K562 (cell line): ENCODE measurements at regions of chr15 and their contacts with region 1.

Region 1: DNA sequence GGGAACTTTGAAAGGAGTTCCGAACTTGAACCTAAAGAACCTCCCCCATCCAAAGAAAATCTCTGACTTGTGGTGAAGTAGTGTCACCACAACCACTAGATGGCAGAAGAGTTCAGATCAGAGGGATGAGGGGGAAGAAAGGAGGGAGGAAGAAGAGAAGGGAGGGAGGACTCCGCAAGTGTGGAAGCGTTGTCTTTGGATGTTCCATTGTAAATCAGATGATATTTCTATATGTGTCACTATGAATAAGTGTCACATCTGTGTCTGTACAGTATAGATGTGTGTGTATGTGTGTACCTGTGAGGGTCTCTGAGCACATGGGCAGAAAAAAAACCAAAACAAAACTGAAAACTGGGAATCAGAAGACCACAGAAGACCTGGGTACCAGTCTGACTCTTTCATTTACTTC is 16.9 kb downstream of the SLC24A1 start:
- DNase-seq: peak; percentile 85 to 86 (median 85)
- ATAC-seq: peak; percentile 93
- H3K4me3 ChIP-seq: no peak overlapping the region
- H3K27ac ChIP-seq: no peak overlapping the region
- H3K4me1 ChIP-seq: peaks cover 3 to 7% of the 10 kb centered on the region in 2 experiments; a peak in 3 of 5 replicates
- H3K27me3 ChIP-seq: no peaks in the 10 kb centered on the region
- CTCF ChIP-seq: peak; percentile 82 to 92 (median 84)
- EP300 ChIP-seq: no peak
- POLR2A ChIP-seq: no peak
- RAD21 ChIP-seq: peak; percentile 82 to 93

Region 2: GRCh38 chr15:65318870-65319356 is 319.8 kb before region 1 on chr15:
- CTCF ChIA-PET with region 1: no interaction called
- POLR2A ChIA-PET with region 1: no interaction called
- in situ Hi-C with region 1: no loop called
- intact Hi-C with region 1: loop called (anchors 10 kb)
- DNase-seq: peak; percentile 84 to 91 (median 88)
- ATAC-seq: peak; percentile 98
- H3K4me3 ChIP-seq: no peak overlapping the region
- H3K27ac ChIP-seq: no peak overlapping the region
- H3K4me1 ChIP-seq: peaks cover 0 to 4% of the 10 kb centered on the region in 2 experiments; a peak in 2 of 5 replicates
- H3K27me3 ChIP-seq: peaks cover 25 to 48% of the 10 kb centered on the region in 2 experiments
- CTCF ChIP-seq: peak; percentile 90 to 98 (median 98)
- EP300 ChIP-seq: no peak
- POLR2A ChIP-seq: no peak
- RAD21 ChIP-seq: peak; percentile 97 to 98

Region 3: DNA sequence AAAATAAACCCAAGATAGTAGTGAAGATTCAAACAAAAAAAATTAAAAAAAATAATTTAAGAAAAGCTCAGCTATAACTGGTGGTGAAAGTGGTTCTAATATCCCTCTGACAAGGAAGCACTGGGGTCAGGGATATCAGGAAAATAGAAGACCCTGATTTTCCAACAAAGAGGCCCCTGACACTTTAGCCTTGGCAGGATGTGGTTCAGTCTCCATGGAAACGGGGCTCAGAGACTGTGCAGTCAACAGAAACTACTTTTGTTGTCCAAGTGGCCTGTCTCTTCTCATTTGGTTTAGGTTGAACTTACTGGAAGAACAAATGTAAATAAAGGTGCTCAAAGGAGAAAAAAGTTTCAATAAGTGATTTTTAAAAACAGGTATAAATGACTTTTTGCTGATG is 55.0 kb before region 1 on chr15:
- CTCF ChIA-PET with region 1: no interaction called
- POLR2A ChIA-PET with region 1: no interaction called
- in situ Hi-C with region 1: no loop called
- intact Hi-C with region 1: no loop called
- DNase-seq: no peak
- ATAC-seq: no peak
- H3K4me3 ChIP-seq: no peak overlapping the region
- H3K27ac ChIP-seq: no peak overlapping the region
- H3K4me1 ChIP-seq: no peaks in the 10 kb centered on the region
- H3K27me3 ChIP-seq: no peaks in the 10 kb centered on the region
- CTCF ChIP-seq: no peak
- EP300 ChIP-seq: no peak
- POLR2A ChIP-seq: no peak
- RAD21 ChIP-seq: no peak

Region 4: DNA sequence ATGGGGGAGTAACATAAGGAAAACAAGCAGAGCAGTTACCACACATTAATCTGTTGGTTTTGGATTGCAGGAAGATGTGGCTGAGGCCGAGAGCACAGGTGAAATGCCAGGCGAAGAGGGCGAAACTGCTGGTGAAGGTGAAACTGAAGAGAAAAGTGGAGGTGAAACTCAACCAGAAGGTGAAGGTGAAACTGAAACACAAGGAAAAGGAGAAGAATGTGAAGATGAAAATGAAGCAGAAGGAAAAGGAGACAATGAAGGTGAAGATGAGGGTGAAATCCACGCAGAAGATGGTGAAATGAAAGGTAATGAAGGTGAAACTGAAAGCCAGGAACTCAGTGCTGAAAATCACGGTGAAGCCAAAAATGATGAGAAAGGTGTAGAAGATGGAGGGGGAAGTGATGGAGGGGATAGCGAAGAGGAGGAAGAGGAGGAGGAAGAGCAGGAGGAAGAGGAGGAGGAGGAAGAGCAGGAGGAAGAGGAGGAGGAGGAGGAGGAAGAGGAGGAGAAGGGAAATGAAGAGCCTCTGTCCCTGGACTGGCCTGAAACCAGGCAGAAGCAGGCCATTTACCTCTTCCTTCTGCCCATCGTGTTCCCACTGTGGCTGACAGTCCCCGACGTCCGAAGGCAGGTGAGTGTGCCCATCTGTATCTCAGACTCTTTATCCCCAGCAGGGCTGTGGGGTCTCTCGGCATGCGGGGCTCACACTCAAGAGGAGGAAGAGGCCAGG is 11.8 kb after region 1 on chr15:
- CTCF ChIA-PET with region 1: no interaction called
- POLR2A ChIA-PET with region 1: interaction called, 11 read pairs
- in situ Hi-C with region 1: no loop called
- intact Hi-C with region 1: no loop called
- DNase-seq: no peak
- ATAC-seq: no peak
- H3K4me3 ChIP-seq: no peak overlapping the region
- H3K27ac ChIP-seq: no peak overlapping the region
- H3K4me1 ChIP-seq: peaks cover 0 to 7% of the 10 kb centered on the region in 2 experiments; a peak in 2 of 5 replicates
- H3K27me3 ChIP-seq: no peaks in the 10 kb centered on the region
- CTCF ChIP-seq: no peak
- EP300 ChIP-seq: no peak
- POLR2A ChIP-seq: no peak
- RAD21 ChIP-seq: no peak

Region 5: DNA sequence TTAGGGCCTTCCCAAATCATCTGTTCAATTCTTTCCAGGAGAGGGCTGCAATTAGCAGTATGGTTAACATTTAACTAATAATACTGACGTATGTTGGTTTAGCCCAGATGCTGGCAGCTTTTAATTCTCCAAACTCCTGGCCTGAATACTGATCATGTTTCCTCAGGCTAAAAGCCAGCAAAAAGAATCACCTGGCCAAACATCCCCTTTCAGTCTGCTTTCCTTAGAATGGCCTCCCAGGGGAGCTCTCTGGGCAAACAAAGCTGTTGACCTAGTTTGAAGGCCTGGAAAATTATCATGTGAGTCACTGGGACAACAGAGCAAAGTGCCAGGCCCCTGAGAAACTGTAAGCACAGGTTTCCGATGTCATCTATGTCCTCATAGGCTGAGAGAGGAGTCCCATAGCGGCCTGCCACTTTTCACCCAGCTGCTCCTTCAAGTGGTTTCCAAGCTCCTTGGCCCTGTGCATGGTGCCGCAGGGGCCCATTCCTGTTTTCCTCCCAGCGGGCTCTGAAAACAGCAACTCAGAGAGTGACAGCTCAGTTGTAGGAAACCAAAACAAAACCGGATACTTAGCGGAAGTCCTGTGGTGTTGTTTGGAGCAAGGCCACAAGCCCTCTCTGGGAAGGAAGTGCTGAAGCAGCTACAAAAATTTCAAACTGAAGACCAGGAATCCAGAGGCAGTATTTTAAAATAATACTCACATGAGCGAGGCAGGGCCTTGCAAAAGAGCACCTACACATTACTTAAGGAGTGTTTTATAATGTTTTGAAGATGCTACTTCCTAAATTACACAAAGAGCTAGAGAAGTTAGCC is 194.1 kb after region 1 on chr15:
- CTCF ChIA-PET with region 1: no interaction called
- POLR2A ChIA-PET with region 1: interaction called, 4 read pairs
- in situ Hi-C with region 1: no loop called
- intact Hi-C with region 1: loop called (anchors 5 kb)
- DNase-seq: peak; percentile 65 to 83 (median 70)
- ATAC-seq: peak; percentile 76
- H3K4me3 ChIP-seq: no peak overlapping the region; the same call in 1 of the 2 replicates
- H3K27ac ChIP-seq: peak overlapping the region; percentile 86
- H3K4me1 ChIP-seq: peaks cover 19 to 52% of the 10 kb centered on the region in 2 experiments
- H3K27me3 ChIP-seq: no peaks in the 10 kb centered on the region
- CTCF ChIP-seq: peak; percentile 37 to 63 (median 52); a peak in 4 of 6 replicates
- EP300 ChIP-seq: no peak; the same call in 1 of the 2 replicates
- POLR2A ChIP-seq: peak; percentile 61
- RAD21 ChIP-seq: peak; percentile 52 to 72

Region 6: DNA sequence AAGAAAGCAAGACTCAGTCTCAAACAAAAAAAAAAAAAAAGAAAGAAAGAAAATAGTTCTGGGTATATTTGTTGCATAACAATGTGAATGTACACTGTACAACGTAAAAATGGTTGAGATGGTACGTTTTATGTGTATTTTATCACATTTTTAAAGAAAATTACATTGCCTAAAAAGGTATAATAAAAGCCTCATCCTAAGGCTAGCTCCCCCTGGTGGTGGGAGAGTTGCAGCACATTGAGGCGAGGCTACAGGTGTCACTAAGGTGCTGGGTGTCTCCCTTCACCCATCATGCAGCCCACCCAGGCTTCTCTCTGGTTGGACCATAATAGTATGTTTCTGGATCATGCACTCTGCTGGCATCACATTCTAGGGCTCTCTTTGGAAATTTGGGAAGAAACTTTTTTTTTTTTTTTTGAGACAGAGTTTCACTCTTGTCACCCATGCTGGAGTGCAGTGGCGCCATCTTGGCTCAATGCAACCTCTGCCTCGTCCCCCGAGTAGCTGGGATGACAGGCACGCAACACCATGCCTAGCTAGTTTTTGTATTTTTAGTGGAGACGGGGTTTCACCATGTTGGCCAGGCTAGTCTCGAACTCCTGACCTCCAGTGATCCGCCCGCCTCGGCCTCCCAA is 218.3 kb after region 1 on chr15:
- CTCF ChIA-PET with region 1: interaction called, 4 read pairs
- POLR2A ChIA-PET with region 1: no interaction called
- in situ Hi-C with region 1: loop called (anchors 25 kb)
- intact Hi-C with region 1: loop called (anchors 1 kb)
- DNase-seq: peak; percentile 55 to 85 (median 67)
- ATAC-seq: peak; percentile 92
- H3K4me3 ChIP-seq: no peak overlapping the region
- H3K27ac ChIP-seq: no peak overlapping the region
- H3K4me1 ChIP-seq: no peaks in the 10 kb centered on the region; a peak in 2 of 5 replicates
- H3K27me3 ChIP-seq: no peaks in the 10 kb centered on the region
- CTCF ChIP-seq: peak; percentile 78 to 92 (median 84)
- EP300 ChIP-seq: no peak
- POLR2A ChIP-seq: no peak
- RAD21 ChIP-seq: peak; percentile 54 to 77

Region 7: GRCh38 chr15:65869127-65869953 is 230.7 kb after region 1 on chr15 and contains the start of gene RAB11A:
- CTCF ChIA-PET with region 1: interaction called, 3 read pairs
- POLR2A ChIA-PET with region 1: interaction called, 3 read pairs
- in situ Hi-C with region 1: loop called (anchors 25 kb)
- intact Hi-C with region 1: no loop called
- DNase-seq: peak; percentile 94 to 98 (median 96)
- ATAC-seq: peak; percentile 94
- H3K4me3 ChIP-seq: peak within 1 kb of the TSS; percentile 87
- H3K27ac ChIP-seq: peak within 1 kb of the TSS; percentile 96
- H3K4me1 ChIP-seq: peaks cover 11 to 12% of the 10 kb centered on the region in 2 experiments; a peak in 3 of 5 replicates
- H3K27me3 ChIP-seq: no peaks in the 10 kb centered on the region
- CTCF ChIP-seq: peak; percentile 49 to 58 (median 53); a peak in 4 of 6 replicates
- EP300 ChIP-seq: 0 out of 2 replicates have a peak, but pooled peaks have one; percentile 18
- POLR2A ChIP-seq: peak; percentile 99
- RAD21 ChIP-seq: peak in 1 of 2 experiments; percentile 39; a peak in 2 of 4 replicates
- polyA plus RNA-seq, gene RAB11A: 236 to 271 TPM